Activated CD4-positive, alpha-beta memory T cell treated with anti-CD3 and anti-CD28 coated beads for 36 hours (primary cell): ENCODE measurements at regions of chr14 and their contacts with region 1.

Region 1: GRCh38 chr14:71855399-71856036 is 76.7 kb upstream of the RGS6 start:
- DNase-seq: peak; percentile 67
- H3K4me3 Mint-ChIP-seq: no peak overlapping the region
- H3K27ac Mint-ChIP-seq: no peak overlapping the region
- H3K4me1 Mint-ChIP-seq: peaks cover 5% of the 10 kb centered on the region
- H3K27me3 Mint-ChIP-seq: peaks cover 47% of the 10 kb centered on the region

Region 2: GRCh38 chr14:71776471-71777360 is 78.8 kb before region 1 on chr14:
- CTCF ChIA-PET with region 1: interaction called, 10 read pairs
- POLR2A ChIA-PET with region 1: no interaction called
- intact Hi-C with region 1: no loop called
- DNase-seq: peak; percentile 42
- H3K4me3 Mint-ChIP-seq: no peak overlapping the region
- H3K27ac Mint-ChIP-seq: no peak overlapping the region
- H3K4me1 Mint-ChIP-seq: peaks cover 12% of the 10 kb centered on the region
- H3K27me3 Mint-ChIP-seq: peaks cover 45% of the 10 kb centered on the region

Region 3: DNA sequence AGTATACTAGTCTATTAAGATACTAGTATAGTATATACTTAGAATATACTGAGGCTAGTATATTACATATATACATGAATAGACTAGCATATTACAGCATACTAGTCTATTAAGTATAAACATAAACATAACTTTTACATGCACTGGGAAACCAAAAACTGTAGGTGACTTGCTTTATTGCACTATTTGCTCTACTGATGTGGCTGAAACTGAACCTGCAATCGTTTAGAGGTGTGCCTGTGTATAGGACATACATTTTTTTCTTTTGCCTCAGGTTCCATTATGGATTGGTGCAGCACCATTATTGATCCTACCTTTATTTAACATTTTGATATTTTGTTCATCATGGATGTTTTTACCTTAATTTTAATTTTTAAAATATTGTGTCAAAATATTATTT is 66.5 kb before region 1 on chr14:
- CTCF ChIA-PET with region 1: no interaction called
- POLR2A ChIA-PET with region 1: no interaction called
- intact Hi-C with region 1: no loop called
- DNase-seq: no peak
- H3K4me3 Mint-ChIP-seq: no peak overlapping the region
- H3K27ac Mint-ChIP-seq: no peak overlapping the region
- H3K4me1 Mint-ChIP-seq: no peaks in the 10 kb centered on the region
- H3K27me3 Mint-ChIP-seq: peaks cover 1% of the 10 kb centered on the region